RWPE1 (cell line): ENCODE measurements at regions of chr6 and their contacts with region 1.

Region 1: DNA sequence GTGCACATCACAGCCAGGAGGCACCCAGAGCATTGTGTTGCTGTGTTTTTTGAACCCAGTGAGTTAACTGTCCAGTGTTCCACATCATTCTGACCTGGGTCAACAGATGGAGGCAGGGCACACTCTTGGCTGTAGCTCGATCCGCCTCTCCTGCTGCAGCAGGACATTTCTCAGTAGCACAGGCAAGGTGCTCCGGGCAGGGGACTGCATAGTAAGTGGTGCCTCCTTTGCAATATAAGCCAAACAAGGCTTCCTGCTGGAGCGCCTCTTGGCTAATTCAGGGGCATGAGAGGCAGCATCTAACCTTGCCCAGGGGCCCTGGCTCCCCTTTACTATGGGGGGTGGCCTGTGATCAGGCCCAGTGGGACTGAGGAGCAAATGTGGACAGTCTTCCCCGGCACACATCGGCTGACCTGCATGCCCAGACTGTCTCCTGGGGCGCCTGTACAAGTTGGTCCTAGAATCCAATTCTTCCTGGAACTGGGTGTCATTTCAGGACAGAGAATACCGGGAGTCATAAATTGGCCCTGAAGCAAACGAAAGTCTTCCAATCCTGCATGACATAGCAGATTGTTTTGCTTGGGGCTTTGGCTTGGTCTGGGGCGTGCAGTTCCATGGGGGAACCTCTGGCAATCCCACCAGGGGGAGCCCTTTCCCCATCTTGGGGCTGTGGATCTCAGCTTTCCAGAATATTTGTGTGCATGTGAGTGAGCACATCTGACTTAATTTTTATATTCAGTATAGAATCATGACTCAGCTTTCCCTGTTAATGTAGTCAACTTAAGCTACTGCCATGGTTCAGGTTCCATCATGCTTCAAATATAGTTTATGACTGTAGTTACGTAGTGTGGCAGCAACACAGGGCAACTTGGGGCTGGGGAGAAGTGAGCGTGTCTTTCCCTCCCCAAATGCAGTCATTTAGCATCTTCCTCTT is 56.0 kb upstream of the DDR1 start:
- DNase-seq: peak; percentile 89
- H3K27ac ChIP-seq: peak overlapping the region; percentile 96
- CTCF ChIP-seq: peak; percentile 90

Region 2: DNA sequence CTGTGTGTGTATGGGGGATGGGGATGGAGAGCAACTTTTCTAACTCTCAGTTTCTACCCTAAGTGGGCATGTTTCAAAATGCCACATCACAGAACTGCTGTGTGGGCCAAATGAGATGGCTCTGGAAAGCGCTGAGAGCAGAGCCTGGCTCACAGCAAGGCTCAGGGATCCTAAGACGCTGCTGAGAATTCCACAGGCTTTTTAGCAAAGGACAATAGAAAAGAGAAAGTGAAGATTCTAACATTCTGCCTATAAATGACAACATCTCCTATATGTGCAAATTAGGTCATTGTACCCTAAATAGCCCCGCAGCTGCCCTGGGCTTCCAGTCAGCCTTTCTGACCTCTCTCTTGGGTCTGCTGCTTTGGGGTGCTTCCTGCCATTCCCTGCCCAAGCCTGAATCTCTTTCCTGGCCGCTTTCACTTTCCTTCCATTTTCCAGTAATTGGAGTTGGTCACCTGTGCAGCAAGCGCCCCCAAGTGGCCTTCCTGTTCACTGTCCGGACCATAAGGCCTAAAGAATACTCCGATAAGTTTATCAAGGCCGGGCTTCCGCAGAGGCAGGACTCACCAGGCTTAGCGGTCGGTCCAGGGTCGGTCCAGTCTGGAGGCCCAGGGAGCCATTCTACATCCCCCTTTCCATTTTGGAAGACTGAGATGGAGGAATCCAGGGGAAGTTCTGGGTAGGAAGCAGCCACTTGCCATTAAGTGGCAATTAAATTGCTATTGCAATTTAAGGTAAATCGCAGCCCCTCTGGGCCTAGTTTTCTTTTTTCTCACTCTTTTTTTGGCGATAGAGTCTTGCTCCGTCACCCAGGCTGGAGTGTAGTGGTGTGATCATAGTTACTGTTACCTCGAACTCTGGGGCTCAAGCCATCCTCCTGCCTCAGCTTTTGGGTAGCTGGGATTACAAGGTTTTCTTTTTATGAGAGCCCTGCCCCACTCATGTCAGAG is 49.4 kb after region 1 on chr6:
- CTCF ChIA-PET with region 1: interaction called, 15 read pairs
- POLR2A ChIA-PET with region 1: interaction called, 3 read pairs
- DNase-seq: peak; percentile 71
- H3K27ac ChIP-seq: peak overlapping the region; percentile 95
- CTCF ChIP-seq: peak; percentile 93

Region 3: GRCh38 chr6:30883685-30884520 is 55.6 kb after region 1 on chr6 and contains the start of gene DDR1:
- CTCF ChIA-PET with region 1: interaction called, 15 read pairs
- POLR2A ChIA-PET with region 1: no interaction called
- DNase-seq: peak; percentile 90
- H3K27ac ChIP-seq: peak within 1 kb of the TSS; percentile 99
- CTCF ChIP-seq: no peak